ENCODE measurements at regions of chrX and their contacts with region 1.

Region 1: DNA sequence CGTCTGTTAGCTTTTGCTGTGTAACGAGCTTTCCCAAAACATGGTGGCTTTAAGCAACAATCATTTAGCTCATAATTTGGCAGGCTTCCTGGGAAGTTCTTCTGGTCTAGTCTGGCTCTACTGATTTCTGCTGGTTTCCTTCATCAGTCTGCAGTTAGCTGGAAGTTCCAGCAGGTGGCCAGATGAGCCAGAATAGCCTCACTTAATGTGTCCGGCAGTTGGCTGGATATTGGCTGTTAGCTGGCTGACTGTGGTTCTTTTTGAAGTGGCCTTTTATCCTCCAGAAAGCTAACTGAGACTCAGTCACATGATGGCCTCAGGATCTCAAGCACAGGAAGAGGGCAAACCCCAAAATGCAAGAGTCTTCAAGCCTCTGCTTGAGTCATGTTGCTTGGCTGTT is 34.9 kb downstream of the FTHL17 start:
- H3K4me3 Mint-ChIP-seq: no peak overlapping the region
- H3K27ac Mint-ChIP-seq: no peak overlapping the region
- H3K4me1 Mint-ChIP-seq: peaks cover 10% of the 10 kb centered on the region
- H3K27me3 Mint-ChIP-seq: peaks cover 4% of the 10 kb centered on the region

Region 2: GRCh38 chrX:30735839-30736238 is 301.1 kb before region 1 on chrX:
- intact Hi-C with region 1: loop called (anchors 5 kb)
- H3K4me3 Mint-ChIP-seq: no peak overlapping the region
- H3K27ac Mint-ChIP-seq: no peak overlapping the region
- H3K4me1 Mint-ChIP-seq: no peaks in the 10 kb centered on the region
- H3K27me3 Mint-ChIP-seq: no peaks in the 10 kb centered on the region

Region 3: GRCh38 chrX:31213941-31214340 is 177.0 kb after region 1 on chrX:
- intact Hi-C with region 1: loop called (anchors 5 kb)
- H3K4me3 Mint-ChIP-seq: no peak overlapping the region
- H3K27ac Mint-ChIP-seq: no peak overlapping the region
- H3K4me1 Mint-ChIP-seq: no peaks in the 10 kb centered on the region
- H3K27me3 Mint-ChIP-seq: no peaks in the 10 kb centered on the region

Region 4: DNA sequence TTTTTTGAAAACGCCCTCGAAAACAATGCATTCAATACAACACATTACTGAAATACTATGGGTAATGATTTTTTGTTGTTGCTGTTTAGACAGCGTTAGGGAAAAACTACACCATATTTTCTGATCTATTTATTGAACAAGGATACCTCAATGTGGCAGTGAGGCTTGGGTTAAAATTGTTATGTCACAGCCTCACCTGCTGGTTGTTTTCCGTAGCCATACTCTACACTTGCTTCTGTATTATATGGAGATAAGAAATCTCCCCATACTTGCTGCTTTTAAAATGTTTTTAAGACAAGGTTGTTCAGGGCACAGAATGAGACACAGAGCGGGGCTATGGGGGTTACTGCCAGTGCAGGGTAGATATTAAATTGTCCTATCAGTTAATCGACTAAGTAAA is 256.5 kb after region 1 on chrX:
- intact Hi-C with region 1: loop called (anchors 1 kb)
- H3K4me3 Mint-ChIP-seq: no peak overlapping the region
- H3K27ac Mint-ChIP-seq: no peak overlapping the region
- H3K4me1 Mint-ChIP-seq: no peaks in the 10 kb centered on the region
- H3K27me3 Mint-ChIP-seq: no peaks in the 10 kb centered on the region

Region 5: GRCh38 chrX:31423609-31424189 is 386.8 kb after region 1 on chrX:
- intact Hi-C with region 1: loop called (anchors 2 kb)
- H3K4me3 Mint-ChIP-seq: no peak overlapping the region
- H3K27ac Mint-ChIP-seq: no peak overlapping the region
- H3K4me1 Mint-ChIP-seq: no peaks in the 10 kb centered on the region
- H3K27me3 Mint-ChIP-seq: no peaks in the 10 kb centered on the region

Region 6: GRCh38 chrX:31658360-31658759 is 621.5 kb after region 1 on chrX:
- intact Hi-C with region 1: loop called (anchors 1 kb)
- H3K4me3 Mint-ChIP-seq: no peak overlapping the region
- H3K27ac Mint-ChIP-seq: no peak overlapping the region
- H3K4me1 Mint-ChIP-seq: peaks cover 5% of the 10 kb centered on the region
- H3K27me3 Mint-ChIP-seq: peaks cover 2% of the 10 kb centered on the region

Measured in dendritic cell treated with granulocyte-macrophage colony-stimulating factor and Interleukin-4, amounts not matched to agents 40 ng/mL and 50 ng/mL, for 4 days (primary cell).